IMR-90 (cell line): ENCODE measurements at regions of chr6 and their contacts with region 1.

Region 1: GRCh38 chr6:17771609-17772008 is 64.9 kb upstream of the NUP153 start:
- DNase-seq: no peak
- ATAC-seq: no peak
- H3K4me3 ChIP-seq: no peak overlapping the region
- H3K27ac ChIP-seq: no peak overlapping the region
- H3K4me1 ChIP-seq: no peaks in the 10 kb centered on the region
- H3K27me3 ChIP-seq: no peaks in the 10 kb centered on the region
- CTCF ChIP-seq: no peak
- POLR2A ChIP-seq: no peak
- RAD21 ChIP-seq: no peak

Region 2: DNA sequence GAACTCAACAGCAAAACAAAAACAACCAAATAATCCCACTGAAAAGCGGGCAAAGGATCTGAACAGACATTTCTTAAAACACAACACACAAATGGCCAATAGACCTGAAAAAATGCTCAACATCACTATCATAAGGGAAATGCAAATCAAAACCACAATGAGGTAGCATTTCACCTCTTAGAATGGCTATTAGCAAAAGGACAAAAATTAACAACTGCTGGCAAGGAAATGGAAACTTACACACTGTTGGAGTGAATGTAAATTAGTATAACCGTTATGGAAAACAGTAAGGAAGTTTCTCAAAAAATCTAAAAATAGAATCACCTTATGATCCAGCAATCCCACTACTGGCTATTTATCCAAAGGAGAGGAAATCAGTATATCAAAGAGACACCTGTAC is 150.6 kb before region 1 on chr6:
- CTCF ChIA-PET with region 1: no interaction called
- POLR2A ChIA-PET with region 1: no interaction called
- dilution Hi-C with region 1: no loop called
- in situ Hi-C with region 1: loop called (anchors 10 kb)
- intact Hi-C with region 1: no loop called
- DNase-seq: no peak
- ATAC-seq: no peak
- H3K4me3 ChIP-seq: no peak overlapping the region
- H3K27ac ChIP-seq: no peak overlapping the region
- H3K4me1 ChIP-seq: no peaks in the 10 kb centered on the region
- H3K27me3 ChIP-seq: no peaks in the 10 kb centered on the region
- CTCF ChIP-seq: no peak
- POLR2A ChIP-seq: no peak
- RAD21 ChIP-seq: no peak

Region 3: DNA sequence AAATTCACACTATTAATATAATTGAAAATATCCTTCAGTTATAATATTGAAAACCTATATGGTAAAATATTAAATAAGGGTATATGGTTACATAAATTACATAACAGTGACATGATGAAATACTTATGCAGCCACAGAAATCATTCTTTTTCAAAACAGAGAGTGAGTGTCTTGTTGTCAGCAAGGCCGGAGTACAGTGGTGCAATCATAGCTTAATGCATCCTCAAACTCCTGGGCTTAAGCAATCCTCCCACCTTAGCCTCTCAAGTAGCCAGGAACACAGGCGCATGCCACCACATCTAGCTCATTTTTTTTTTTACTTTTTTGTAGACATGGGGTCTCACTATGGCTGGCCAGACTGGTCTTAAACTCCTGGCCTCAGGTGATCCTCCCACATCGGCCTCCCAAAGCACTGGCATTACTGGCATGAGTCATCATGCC is 131.1 kb before region 1 on chr6:
- CTCF ChIA-PET with region 1: no interaction called
- POLR2A ChIA-PET with region 1: no interaction called
- dilution Hi-C with region 1: no loop called
- in situ Hi-C with region 1: no loop called
- intact Hi-C with region 1: loop called (anchors 10 kb)
- DNase-seq: peak; percentile 35
- ATAC-seq: no peak
- H3K4me3 ChIP-seq: no peak overlapping the region
- H3K27ac ChIP-seq: no peak overlapping the region
- H3K4me1 ChIP-seq: 0 out of 2 replicates have a peak, but pooled peaks cover 2% of the 10 kb centered on the region
- H3K27me3 ChIP-seq: no peaks in the 10 kb centered on the region
- CTCF ChIP-seq: no peak
- POLR2A ChIP-seq: no peak
- RAD21 ChIP-seq: no peak

Region 4: GRCh38 chr6:17673543-17674254 is 97.9 kb before region 1 on chr6:
- CTCF ChIA-PET with region 1: no interaction called
- POLR2A ChIA-PET with region 1: no interaction called
- dilution Hi-C with region 1: no loop called
- in situ Hi-C with region 1: no loop called
- intact Hi-C with region 1: loop called (anchors 10 kb)
- DNase-seq: no peak
- ATAC-seq: 0 out of 2 replicates have a peak, but pooled peaks have one; percentile 24
- H3K4me3 ChIP-seq: no peak overlapping the region
- H3K27ac ChIP-seq: no peak overlapping the region
- H3K4me1 ChIP-seq: no peaks in the 10 kb centered on the region
- H3K27me3 ChIP-seq: no peaks in the 10 kb centered on the region
- CTCF ChIP-seq: no peak
- POLR2A ChIP-seq: no peak
- RAD21 ChIP-seq: no peak